CD8-positive, alpha-beta T cell (primary cell): ENCODE measurements at regions of chr2 and their contacts with region 1.

Region 1: GRCh38 chr2:219642465-219643080 is 15.1 kb downstream of the SLC4A3 start:
- DNase-seq: peak; percentile 76 to 95 (median 89)
- ATAC-seq: peak; percentile 100
- H3K4me3 ChIP-seq: no peak overlapping the region
- H3K4me3 Mint-ChIP-seq: no peak overlapping the region
- H3K27ac ChIP-seq: no peak overlapping the region
- H3K27ac Mint-ChIP-seq: no peak overlapping the region
- H3K4me1 ChIP-seq: no peaks in the 10 kb centered on the region
- H3K4me1 Mint-ChIP-seq: peaks cover 7% of the 10 kb centered on the region
- H3K27me3 ChIP-seq: peaks cover 0 to 1% of the 10 kb centered on the region in 2 experiments
- H3K27me3 Mint-ChIP-seq: peaks cover 33% of the 10 kb centered on the region
- CTCF ChIP-seq: peak; percentile 99

Region 2: DNA sequence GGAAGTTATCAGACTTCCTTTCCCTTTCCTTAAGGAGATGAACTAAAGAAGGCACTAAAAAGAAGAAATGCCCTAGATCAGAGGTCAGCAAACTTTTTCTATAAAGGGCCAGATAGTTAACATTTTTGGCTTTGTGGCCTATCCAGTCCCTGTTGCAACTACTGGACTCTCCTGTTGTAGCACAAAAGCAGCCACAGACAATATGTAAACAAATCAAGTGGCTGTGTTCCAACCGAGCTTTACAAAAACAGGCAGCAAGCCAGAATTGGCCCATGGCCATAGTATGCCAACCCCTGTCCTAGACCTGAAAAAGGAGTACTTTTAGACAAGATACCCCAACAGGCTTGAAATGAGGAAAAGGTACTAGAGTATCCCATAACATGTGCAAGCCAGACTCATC is 492.9 kb before region 1 on chr2:
- CTCF ChIA-PET with region 1: no interaction called
- POLR2A ChIA-PET with region 1: no interaction called
- intact Hi-C with region 1: no loop called
- DNase-seq: no peak
- ATAC-seq: no peak
- H3K4me3 ChIP-seq: no peak overlapping the region
- H3K4me3 Mint-ChIP-seq: no peak overlapping the region
- H3K27ac ChIP-seq: no peak overlapping the region
- H3K27ac Mint-ChIP-seq: no peak overlapping the region
- H3K4me1 ChIP-seq: no peaks in the 10 kb centered on the region
- H3K4me1 Mint-ChIP-seq: no peaks in the 10 kb centered on the region
- H3K27me3 ChIP-seq: no peaks in the 10 kb centered on the region
- H3K27me3 Mint-ChIP-seq: no peaks in the 10 kb centered on the region
- CTCF ChIP-seq: no peak

Region 3: GRCh38 chr2:219475697-219476651 is 166.6 kb before region 1 on chr2:
- CTCF ChIA-PET with region 1: no interaction called
- POLR2A ChIA-PET with region 1: no interaction called
- intact Hi-C with region 1: loop called in 1 of 2 experiments (anchors 10 kb)
- DNase-seq: peak in 7 of 9 experiments; percentile 32 to 70 (median 60)
- ATAC-seq: peak; percentile 77
- H3K4me3 ChIP-seq: no peak overlapping the region
- H3K4me3 Mint-ChIP-seq: no peak overlapping the region
- H3K27ac ChIP-seq: no peak overlapping the region
- H3K27ac Mint-ChIP-seq: no peak overlapping the region
- H3K4me1 ChIP-seq: no peaks in the 10 kb centered on the region
- H3K4me1 Mint-ChIP-seq: peaks cover 4% of the 10 kb centered on the region
- H3K27me3 ChIP-seq: no peaks in the 10 kb centered on the region
- H3K27me3 Mint-ChIP-seq: peaks cover 3% of the 10 kb centered on the region
- CTCF ChIP-seq: peak; percentile 58